BJ (cell line): ENCODE measurements at regions of chr12 and their contacts with region 1.

Region 1: GRCh38 chr12:89411846-89412245 is 59.5 kb upstream of the DUSP6 start:
- DNase-seq: no peak
- H3K4me3 ChIP-seq: no peak overlapping the region
- H3K27me3 ChIP-seq: no peaks in the 10 kb centered on the region
- CTCF ChIP-seq: no peak

Region 2: GRCh38 chr12:89439941-89440340 is 28.1 kb after region 1 on chr12:
- CTCF ChIA-PET with region 1: no interaction called
- POLR2A ChIA-PET with region 1: interaction called, 15 read pairs
- DNase-seq: no peak
- H3K4me3 ChIP-seq: no peak overlapping the region
- H3K27me3 ChIP-seq: no peaks in the 10 kb centered on the region
- CTCF ChIP-seq: no peak